Mammary epithelial cell (primary cell): ENCODE measurements at regions of chr2 and their contacts with region 1.

Region 1: DNA sequence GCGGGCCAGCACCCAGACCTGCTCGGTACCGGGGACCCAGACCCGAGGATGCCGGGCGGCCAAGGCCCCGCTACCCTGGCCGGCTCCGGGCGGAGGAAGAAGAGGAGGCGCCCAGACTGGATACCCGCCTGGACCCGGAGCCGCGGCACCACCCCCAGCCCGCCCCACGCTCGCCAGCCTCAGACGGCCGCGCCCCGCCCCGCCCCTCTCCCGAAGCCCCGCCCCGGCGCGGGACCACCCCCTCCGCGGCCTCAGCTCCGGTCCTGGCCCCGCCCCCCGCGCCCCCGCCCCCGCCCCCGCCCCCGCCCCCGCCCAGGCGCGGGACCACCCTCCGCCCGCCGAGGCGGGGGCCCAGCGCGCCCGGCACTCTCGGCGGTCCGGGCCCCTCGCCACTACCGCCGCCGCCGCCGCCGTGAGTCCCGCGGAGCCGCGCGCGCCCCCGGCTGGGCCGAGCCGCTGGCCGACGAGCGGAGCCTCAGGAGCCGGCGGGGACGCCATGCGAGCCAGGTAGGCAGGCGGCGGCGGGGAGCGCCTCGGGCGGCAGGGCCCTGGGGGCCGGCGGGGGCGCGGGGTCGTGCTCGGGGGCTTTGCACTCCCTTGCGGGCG is at the start of gene SH3BP4:
- DNase-seq: peak; percentile 66
- H3K4me3 ChIP-seq: peak within 1 kb of the TSS; percentile 79 to 93 (median 82)
- H3K27ac ChIP-seq: peak within 1 kb of the TSS; percentile 100
- H3K4me1 ChIP-seq: peaks cover 41% of the 10 kb centered on the region
- H3K27me3 ChIP-seq: no peaks in the 10 kb centered on the region
- CTCF ChIP-seq: no peak
- total RNA-seq, gene SH3BP4: 54.6 to 63.0 TPM

Region 2: DNA sequence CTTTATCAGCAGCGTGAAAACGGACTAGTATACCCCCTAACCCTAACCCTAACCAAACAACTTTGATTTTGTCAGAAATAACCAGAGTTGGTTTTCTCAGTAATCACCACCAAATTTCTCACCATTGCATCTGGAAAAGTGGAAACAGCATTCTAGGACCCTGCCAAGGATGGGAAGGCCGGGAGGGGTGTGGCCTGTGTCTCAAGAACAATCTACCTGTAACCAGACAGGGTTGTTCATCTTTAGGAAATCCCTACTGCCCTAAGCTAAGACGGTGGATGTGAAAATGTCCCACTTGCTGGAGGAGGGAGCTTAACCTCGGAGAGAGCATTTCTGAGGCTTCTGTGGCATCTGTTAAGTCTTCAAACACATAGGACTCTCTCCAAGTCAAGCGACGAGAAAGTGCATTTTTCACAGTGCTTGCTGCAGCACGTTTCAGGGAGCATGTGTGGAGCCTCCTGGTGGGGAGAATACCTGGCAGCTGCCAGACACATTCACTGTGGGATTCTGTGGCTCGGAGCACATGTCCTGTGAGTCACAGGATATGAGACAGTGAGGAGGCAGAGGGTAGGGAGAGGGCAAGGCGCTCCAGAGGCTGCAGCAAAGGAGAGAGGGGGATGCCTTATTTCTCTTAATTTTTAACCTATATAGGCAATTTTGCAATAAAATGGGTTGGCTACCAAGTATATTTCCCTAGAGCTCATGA is 693.8 kb before region 1 on chr2:
- CTCF ChIA-PET with region 1: no interaction called
- dilution Hi-C with region 1: no loop called
- in situ Hi-C with region 1: no loop called
- intact Hi-C with region 1: loop called (anchors 10 kb)
- DNase-seq: peak; percentile 99
- H3K4me3 ChIP-seq: no peak overlapping the region
- H3K27ac ChIP-seq: peak overlapping the region; percentile 99
- H3K4me1 ChIP-seq: peaks cover 76% of the 10 kb centered on the region
- H3K27me3 ChIP-seq: no peaks in the 10 kb centered on the region
- CTCF ChIP-seq: peak; percentile 82 to 83

Region 3: DNA sequence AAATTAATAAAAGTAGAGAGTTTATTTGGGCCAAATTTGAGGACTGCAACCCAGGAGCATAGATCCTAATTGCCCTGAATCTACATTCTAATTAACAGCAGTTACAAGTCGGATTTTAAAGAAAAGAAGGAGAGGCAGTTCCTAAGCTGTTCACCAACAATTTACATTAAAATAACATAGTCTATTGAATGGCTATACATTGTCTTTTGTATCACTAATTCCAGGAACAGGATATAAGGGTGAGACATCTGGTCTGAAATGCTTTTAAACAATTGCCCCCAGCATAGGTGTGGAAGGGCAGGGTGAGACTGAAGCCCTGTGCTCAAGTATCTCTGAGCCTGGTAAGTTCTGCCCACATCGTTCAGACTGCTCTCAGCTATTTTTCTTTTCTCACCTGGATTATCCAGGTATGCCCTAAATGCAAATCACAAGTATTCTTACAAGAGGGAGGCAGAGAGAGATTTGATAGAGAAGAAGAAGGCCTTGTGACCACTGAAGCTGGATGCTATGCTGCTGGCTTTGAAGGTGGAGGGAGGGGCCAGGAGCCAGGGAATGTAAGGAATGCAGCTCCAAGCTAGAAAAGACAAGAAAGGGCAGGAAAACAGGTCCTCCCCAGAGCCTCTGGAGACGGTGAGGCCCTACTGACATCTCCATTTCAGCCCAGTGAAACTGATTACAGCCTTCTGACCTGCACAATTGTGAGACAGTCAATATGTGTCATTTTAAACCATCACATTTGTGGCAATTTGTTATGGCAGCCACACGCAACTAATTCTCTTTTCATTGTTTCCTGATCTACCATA is 265.5 kb before region 1 on chr2:
- CTCF ChIA-PET with region 1: no interaction called
- dilution Hi-C with region 1: no loop called
- in situ Hi-C with region 1: no loop called
- intact Hi-C with region 1: loop called (anchors 5 kb)
- DNase-seq: peak; percentile 55
- H3K4me3 ChIP-seq: no peak overlapping the region
- H3K27ac ChIP-seq: peak overlapping the region; percentile 83
- H3K4me1 ChIP-seq: peaks cover 48% of the 10 kb centered on the region
- H3K27me3 ChIP-seq: no peaks in the 10 kb centered on the region
- CTCF ChIP-seq: no peak

Region 4: DNA sequence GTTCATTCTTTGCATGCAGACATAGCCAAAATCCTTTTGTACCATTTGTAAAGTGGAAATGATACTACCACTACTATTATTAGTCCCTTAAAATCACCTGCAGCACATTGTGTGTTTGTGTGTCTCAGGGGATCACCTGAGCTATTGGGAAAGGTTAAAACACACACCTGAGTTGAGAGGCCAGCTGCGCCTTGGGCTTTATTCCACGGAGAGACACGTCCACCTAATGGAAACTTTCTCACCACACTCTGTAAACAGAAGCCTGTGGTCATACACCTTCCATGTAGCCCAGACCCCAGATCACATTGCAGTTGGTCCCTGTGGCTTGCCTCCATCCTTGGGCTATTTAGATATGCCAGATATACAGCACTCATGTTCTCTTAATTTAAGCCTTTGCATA is 81.8 kb before region 1 on chr2:
- CTCF ChIA-PET with region 1: no interaction called
- dilution Hi-C with region 1: loop called (anchors 5 kb)
- in situ Hi-C with region 1: no loop called
- intact Hi-C with region 1: no loop called
- DNase-seq: no peak
- H3K4me3 ChIP-seq: no peak overlapping the region
- H3K27ac ChIP-seq: no peak overlapping the region
- H3K4me1 ChIP-seq: peaks cover 9% of the 10 kb centered on the region
- H3K27me3 ChIP-seq: no peaks in the 10 kb centered on the region
- CTCF ChIP-seq: no peak

Region 5: DNA sequence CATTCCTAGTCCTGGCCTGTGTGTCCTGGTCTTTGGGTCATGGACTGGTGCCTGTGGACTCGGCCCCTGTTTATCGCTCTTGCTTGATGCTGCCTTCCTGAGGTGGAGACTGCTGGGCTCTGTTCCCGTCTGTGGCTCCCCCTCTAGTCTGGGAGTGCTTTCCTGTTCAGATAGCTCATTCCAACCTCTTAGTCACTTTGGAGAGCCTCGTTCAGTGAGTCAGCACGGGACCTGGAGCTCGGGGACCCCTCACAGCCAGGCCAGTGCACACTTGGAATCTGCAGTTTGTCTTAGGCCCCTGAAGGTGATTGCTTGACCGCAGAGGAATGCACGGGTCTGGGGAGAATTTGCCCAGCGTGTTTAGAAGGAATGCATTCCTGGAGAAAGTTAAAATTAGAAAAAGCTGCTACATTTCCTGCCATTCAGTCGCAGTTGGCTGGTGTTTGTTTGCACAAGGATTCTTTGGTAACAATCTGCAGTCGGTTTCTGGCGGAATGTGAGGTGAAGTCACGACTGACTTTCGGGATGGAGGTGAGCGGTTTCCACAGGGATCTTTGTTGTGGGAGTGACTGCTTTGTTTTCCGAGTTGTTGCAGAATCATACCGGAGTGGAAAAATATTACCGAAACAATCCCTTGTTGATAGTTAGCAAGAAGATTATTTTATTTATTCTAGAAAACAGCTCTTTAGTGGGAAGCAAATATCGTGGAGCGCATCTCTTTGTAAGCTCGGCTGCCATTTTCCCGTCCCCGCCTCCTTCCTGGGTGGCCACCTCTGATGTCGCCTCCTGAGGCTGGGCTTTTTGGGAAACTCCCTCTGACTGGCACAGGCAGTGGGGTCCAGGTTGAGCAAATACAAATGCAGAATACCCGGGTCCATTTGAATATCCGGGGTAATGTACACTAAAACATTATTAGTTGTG is 29.7 kb after region 1 on chr2:
- CTCF ChIA-PET with region 1: no interaction called
- dilution Hi-C with region 1: no loop called
- in situ Hi-C with region 1: no loop called
- intact Hi-C with region 1: loop called (anchors 2 kb)
- DNase-seq: peak; percentile 95
- H3K4me3 ChIP-seq: peak overlapping the region in 2 of 3 experiments; percentile 4 to 15
- H3K27ac ChIP-seq: peak overlapping the region; percentile 95
- H3K4me1 ChIP-seq: peaks cover 51% of the 10 kb centered on the region
- H3K27me3 ChIP-seq: no peaks in the 10 kb centered on the region
- CTCF ChIP-seq: peak in 1 of 2 donors; percentile 17

Region 6: GRCh38 chr2:235055891-235056516 is 104.2 kb after region 1 on chr2:
- CTCF ChIA-PET with region 1: no interaction called
- dilution Hi-C with region 1: no loop called
- in situ Hi-C with region 1: no loop called
- intact Hi-C with region 1: loop called (anchors 1 kb)
- DNase-seq: peak; percentile 30
- H3K4me3 ChIP-seq: no peak overlapping the region
- H3K27ac ChIP-seq: no peak overlapping the region
- H3K4me1 ChIP-seq: peaks cover under 1% of the 10 kb centered on the region
- H3K27me3 ChIP-seq: no peaks in the 10 kb centered on the region
- CTCF ChIP-seq: peak; percentile 77 to 90